ENCODE measurements at regions of chr3 and their contacts with region 1.

Region 1: DNA sequence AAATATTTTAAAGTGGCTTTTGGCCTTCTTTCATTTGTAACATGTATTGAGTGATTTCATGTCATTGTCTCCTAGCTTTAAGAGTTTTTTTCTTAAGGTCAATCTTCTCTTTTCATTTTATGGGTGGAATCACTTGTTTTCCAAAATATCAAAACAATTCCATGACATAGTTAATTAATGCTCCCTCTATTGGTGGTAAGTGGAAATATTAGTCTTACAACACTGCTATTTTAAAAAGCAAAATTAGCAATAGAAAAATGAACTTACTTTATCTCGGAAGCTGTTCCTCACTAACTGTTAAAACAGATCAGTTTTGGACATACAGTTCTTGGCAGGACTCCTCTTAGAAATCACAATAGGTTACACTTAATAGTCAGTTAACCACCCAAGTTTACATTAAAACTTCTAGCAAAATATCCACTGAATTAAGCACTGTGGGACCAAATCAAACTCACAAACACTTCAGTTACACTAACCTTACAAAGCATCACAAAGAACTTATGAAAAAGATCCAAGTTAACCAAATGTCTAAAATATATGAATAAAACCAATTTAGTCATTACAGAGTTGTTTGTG is 42.4 kb downstream of the TIGIT start:
- DNase-seq: no peak
- H3K4me3 ChIP-seq: no peak overlapping the region
- H3K27ac ChIP-seq: no peak overlapping the region
- H3K4me1 ChIP-seq: no peaks in the 10 kb centered on the region; a peak in 1 of 4 replicates
- H3K27me3 ChIP-seq: no peaks in the 10 kb centered on the region
- CTCF ChIP-seq: peak; percentile 68
- EP300 ChIP-seq: no peak
- RAD21 ChIP-seq: no peak; the same call in 1 of the 2 replicates

Region 2: GRCh38 chr3:114323546-114324254 is 12.5 kb before region 1 on chr3:
- CTCF ChIA-PET with region 1: interaction called, 13 read pairs
- POLR2A ChIA-PET with region 1: no interaction called
- DNase-seq: no peak
- H3K4me3 ChIP-seq: no peak overlapping the region
- H3K27ac ChIP-seq: no peak overlapping the region
- H3K4me1 ChIP-seq: peaks cover 0 to 9% of the 10 kb centered on the region in 2 experiments; a peak in 2 of 4 replicates
- H3K27me3 ChIP-seq: no peaks in the 10 kb centered on the region
- CTCF ChIP-seq: no peak
- EP300 ChIP-seq: no peak
- RAD21 ChIP-seq: no peak

Region 3: DNA sequence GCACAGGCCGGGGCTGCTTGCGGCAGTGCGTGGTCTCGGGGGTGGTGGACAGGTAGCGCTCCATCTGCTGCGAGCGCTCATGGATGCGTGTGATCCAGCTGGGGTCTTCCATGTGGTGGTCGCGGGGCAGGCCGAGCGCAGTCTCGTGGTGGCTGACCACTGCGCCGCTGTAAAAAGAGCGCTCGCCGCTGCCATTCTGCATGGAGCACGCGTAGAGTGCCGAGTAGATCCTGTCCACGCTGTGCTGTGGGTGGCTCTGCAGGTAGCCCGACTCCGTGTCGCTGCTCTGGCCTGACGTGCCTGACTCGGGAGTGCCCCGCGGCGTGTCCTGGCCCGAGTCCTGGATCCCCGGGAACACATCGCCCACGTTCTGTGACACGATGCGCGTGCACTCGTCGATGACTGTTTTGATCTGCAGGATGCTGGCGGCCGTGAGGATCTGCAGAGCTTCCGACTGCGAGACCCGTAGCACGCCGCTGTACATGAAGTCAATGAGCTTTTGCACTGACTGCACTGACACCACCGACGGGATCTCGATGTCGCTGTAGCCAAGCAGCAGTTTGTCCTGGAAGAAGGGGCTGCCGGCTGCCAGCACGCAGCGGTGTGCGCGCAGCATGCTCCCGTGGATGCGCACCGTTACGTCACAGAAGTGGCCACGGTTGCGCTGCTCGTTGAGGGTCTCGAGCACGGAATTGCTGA is 15.1 kb after region 1 on chr3:
- CTCF ChIA-PET with region 1: interaction called, 13 read pairs
- POLR2A ChIA-PET with region 1: no interaction called
- DNase-seq: no peak
- H3K4me3 ChIP-seq: no peak overlapping the region
- H3K27ac ChIP-seq: no peak overlapping the region
- H3K4me1 ChIP-seq: no peaks in the 10 kb centered on the region
- H3K27me3 ChIP-seq: no peaks in the 10 kb centered on the region
- CTCF ChIP-seq: no peak
- EP300 ChIP-seq: no peak
- RAD21 ChIP-seq: no peak

Region 4: GRCh38 chr3:114362815-114363214 is 26.6 kb after region 1 on chr3:
- CTCF ChIA-PET with region 1: interaction called, 10 read pairs
- POLR2A ChIA-PET with region 1: no interaction called
- DNase-seq: peak; percentile 31
- H3K4me3 ChIP-seq: no peak overlapping the region
- H3K27ac ChIP-seq: 0 out of 4 replicates have a peak overlapping the region, but pooled peaks of 1 of the 2 experiments have one; percentile 58
- H3K4me1 ChIP-seq: peaks cover 0 to 11% of the 10 kb centered on the region in 2 experiments; a peak in 1 of 4 replicates
- H3K27me3 ChIP-seq: no peaks in the 10 kb centered on the region
- CTCF ChIP-seq: peak; percentile 66
- EP300 ChIP-seq: no peak
- RAD21 ChIP-seq: peak; percentile 68

Region 5: GRCh38 chr3:114499976-114500375 is 163.8 kb after region 1 on chr3:
- CTCF ChIA-PET with region 1: no interaction called
- POLR2A ChIA-PET with region 1: no interaction called
- DNase-seq: no peak
- H3K4me3 ChIP-seq: no peak overlapping the region
- H3K27ac ChIP-seq: no peak overlapping the region
- H3K4me1 ChIP-seq: peaks cover 0 to 10% of the 10 kb centered on the region in 2 experiments; a peak in 2 of 4 replicates
- H3K27me3 ChIP-seq: no peaks in the 10 kb centered on the region
- CTCF ChIP-seq: no peak
- EP300 ChIP-seq: no peak
- RAD21 ChIP-seq: no peak

Measured in SK-N-SH (cell line).